ENCODE measurements at regions of chr10 and their contacts with region 1.

Region 1: DNA sequence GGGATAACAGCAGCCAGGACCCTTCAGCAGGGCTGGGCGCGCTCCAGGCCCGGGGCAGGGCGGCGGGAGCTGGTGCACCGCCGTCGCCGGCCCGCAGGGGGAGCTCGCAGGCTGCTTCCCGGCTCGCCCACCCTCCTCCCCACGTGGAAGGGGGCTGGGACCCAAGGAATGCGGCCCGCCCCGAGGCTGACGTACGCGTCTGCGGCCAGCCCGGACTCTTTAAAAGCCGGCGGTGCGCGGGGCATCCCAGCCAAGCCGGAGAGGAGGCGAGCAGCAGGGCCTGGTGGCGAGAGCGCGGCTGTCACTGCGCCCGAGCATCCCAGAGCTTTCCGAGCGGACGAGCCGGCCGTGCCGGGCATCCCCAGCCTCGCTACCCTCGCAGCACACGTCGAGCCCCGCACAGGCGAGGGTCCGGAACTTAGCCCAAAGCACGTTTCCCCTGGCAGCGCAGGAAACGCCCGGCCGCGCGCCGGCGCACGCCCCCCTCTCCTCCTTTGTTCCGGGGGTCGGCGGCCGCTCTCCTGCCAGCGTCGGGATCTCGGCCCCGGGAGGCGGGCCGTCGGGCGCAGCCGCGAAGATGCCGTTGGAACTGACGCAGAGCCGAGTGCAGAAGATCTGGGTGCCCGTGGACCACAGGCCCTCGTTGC is at the start of gene PFKFB3:
- DNase-seq: peak; percentile 95 to 97
- ATAC-seq: peak; percentile 93 to 96 (median 95)
- H3K4me3 ChIP-seq: peak within 1 kb of the TSS; percentile 50 to 94 (median 78)
- H3K27ac ChIP-seq: peak within 1 kb of the TSS; percentile 22 to 98 (median 92)
- H3K4me1 ChIP-seq: peaks cover 6 to 52% (median 31%) of the 10 kb centered on the region in 9 donors
- H3K27me3 ChIP-seq: no peaks in the 10 kb centered on the region
- CTCF ChIP-seq: peak; percentile 94 to 99 (median 98)
- total RNA-seq, gene PFKFB3: 7.6 to 77.3 (median 16.3) TPM

Region 2: DNA sequence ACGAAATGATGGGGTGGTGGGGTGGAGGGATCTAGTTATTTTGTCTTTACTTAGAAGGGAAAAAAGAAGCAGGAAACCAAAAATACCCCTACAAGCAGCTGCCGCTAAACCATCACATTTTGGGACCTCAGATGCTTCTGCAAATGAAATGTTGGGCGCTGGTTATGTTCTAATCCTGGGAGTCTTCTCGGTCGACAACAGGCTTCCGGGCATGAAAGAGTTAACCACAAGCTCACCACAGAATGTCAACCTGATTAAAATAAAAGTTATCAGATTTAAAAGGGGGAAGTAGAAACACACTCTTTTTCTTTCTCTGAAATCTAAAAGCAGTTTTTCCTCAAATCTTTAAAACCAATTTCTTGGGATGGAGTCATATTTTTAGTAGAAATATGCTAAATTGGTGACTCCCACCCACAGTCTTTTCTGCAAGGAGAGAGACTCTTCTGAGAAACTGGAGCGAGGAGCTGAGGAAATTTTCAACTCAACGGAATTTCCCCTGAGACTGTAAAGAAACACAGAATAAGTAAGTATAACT is 157.4 kb before region 1 on chr10:
- intact Hi-C with region 1: no loop called
- DNase-seq: peak in 1 of 2 donors; percentile 1
- ATAC-seq: no peak
- H3K4me3 ChIP-seq: no peak overlapping the region
- H3K27ac ChIP-seq: no peak overlapping the region
- H3K4me1 ChIP-seq: peaks cover 0 to 18% (median 3%) of the 10 kb centered on the region in 9 donors
- H3K27me3 ChIP-seq: no peaks in the 10 kb centered on the region
- CTCF ChIP-seq: no peak

Region 3: DNA sequence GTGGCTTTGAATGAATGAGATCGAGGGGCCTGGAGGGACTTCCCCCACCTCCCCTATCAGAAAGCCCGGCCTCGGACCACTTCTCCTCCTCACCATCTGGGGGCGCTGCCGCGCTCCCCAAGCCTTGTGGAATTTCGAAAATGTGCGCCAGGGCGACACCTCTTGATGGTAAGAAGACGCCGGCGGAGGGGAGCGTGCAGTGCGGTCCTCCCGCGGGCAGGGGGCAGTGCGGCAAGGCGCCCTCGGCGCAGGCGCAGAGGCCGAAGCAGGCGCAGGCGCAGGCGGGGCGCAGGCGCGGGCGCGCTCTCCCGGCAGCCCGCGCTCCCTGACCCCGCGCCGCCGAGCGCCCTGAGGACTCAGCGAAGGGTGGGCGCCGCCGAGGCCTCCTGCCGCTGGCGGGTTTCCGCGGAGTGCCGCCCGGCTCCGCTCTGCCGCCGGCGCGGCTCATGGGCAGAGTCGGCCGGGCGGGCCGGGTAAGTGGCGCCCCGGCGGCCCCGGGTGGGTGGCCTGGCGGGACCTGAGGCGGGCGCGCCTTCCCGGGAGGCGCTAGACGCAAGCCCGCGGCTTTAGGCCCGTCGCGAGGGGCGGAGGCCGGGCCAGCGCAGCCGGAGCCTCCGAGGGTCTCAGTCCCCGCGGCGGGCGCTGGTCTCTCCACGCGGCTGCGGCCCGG is 114.0 kb before region 1 on chr10 and contains the start of gene RBM17:
- intact Hi-C with region 1: loop called in 1 of 10 experiments (anchors 5 kb)
- DNase-seq: peak; percentile 95 to 96
- ATAC-seq: peak; percentile 85 to 97 (median 92)
- H3K4me3 ChIP-seq: peak within 1 kb of the TSS; percentile 67 to 95 (median 88)
- H3K27ac ChIP-seq: peak within 1 kb of the TSS; percentile 81 to 97 (median 94)
- H3K4me1 ChIP-seq: peaks cover 8 to 70% (median 59%) of the 10 kb centered on the region in 9 donors
- H3K27me3 ChIP-seq: peaks cover 0 to 3% (median 0%) of the 10 kb centered on the region in 7 donors
- CTCF ChIP-seq: peak; percentile 99 to 100 (median 100)
- total RNA-seq, gene RBM17: 53.4 to 93.2 (median 64.0) TPM

Region 4: DNA sequence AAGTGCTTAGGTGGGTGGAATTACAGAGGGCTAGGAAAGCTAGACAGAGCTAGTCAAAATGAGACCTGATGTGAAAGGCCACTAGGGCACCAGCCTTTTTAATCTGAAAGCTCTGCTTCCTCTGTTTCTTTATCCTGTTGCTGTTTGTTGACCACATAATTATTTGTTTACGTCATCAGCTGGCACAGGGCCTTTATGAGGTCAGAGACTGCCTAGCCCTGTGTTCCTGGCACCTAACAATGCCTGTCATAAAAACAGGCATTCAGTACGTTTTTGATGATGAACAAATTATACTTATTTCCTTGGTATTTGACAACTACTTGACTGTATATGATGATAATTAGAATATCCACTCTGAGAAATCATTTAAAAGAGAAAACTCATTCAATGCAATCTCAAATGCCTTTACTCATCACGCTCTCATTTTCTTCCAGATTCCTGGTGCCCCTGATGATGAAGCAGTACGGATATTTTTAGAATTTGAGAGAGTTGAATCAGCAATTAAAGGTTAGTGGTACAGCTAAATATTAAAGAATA is 87.9 kb before region 1 on chr10:
- intact Hi-C with region 1: loop called in 5 of 10 experiments (anchors 5 kb)
- DNase-seq: peak in 1 of 2 donors; percentile 32
- ATAC-seq: peak in 3 of 8 donors; percentile 42 to 65 (median 56)
- H3K4me3 ChIP-seq: no peak overlapping the region
- H3K27ac ChIP-seq: peak overlapping the region in 9 of 10 donors; percentile 26 to 73 (median 55)
- H3K4me1 ChIP-seq: peaks cover 0 to 39% (median 26%) of the 10 kb centered on the region in 9 donors
- H3K27me3 ChIP-seq: no peaks in the 10 kb centered on the region
- CTCF ChIP-seq: no peak

Region 5: DNA sequence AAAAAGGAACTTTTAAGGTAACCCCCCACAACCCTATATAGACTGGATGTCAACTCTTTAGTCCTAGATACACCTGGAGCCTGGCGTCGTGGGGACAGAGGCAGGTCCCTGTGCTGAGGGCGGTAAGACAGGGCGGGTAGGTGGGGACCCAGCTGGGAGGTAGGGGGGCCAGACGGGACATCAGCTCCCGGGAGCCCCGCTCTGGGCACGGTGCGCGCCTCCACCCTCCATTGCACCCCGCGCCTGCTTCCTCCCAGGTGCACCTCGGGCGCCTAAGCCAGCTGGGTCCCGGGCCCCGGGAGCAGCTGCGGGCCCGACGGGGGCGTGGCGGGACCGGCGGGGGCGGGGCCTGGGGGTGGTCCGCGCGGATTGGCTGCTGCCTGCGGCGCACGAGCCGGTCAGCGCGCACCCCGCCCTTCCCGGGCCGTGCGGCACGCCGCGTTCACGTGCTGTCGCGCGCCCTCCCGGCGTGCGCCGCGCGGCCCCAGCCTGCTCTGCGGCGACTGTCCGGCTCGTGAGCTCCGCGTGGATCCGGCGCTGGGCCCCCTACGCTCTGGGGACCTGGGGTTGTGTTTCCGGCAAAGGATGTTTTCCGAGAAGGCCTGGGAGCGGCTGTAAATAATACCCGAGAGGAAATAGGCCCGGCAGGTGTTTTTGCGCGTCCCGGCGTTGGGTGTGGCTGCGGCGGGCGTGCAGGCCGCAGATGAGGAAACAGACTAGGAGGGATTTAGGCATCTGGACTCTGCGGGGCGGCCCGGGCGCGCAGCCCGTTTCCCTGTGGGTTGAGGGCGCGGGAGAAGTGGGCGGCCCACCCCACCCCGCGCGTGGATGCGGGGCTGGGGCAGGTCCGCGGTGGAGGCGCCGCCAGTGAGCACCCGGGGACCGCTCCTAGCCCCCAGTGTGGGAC is 39.2 kb before region 1 on chr10:
- intact Hi-C with region 1: loop called in 6 of 10 experiments (anchors 2 to 5 kb)
- DNase-seq: peak; percentile 91 to 92
- ATAC-seq: peak; percentile 98 to 100 (median 99)
- H3K4me3 ChIP-seq: peak overlapping the region; percentile 27 to 97 (median 82)
- H3K27ac ChIP-seq: peak overlapping the region; percentile 91 to 98 (median 94)
- H3K4me1 ChIP-seq: peaks cover 6 to 49% (median 30%) of the 10 kb centered on the region in 9 donors
- H3K27me3 ChIP-seq: no peaks in the 10 kb centered on the region
- CTCF ChIP-seq: peak in 1 of 9 donors; percentile 9

Region 6: GRCh38 chr10:6275022-6275997 is 72.5 kb after region 1 on chr10:
- intact Hi-C with region 1: loop called in 1 of 10 experiments (anchors 2 kb)
- DNase-seq: peak; percentile 84 to 86
- ATAC-seq: peak; percentile 92 to 99 (median 96)
- H3K4me3 ChIP-seq: peak overlapping the region in 6 of 10 donors; percentile 17 to 38 (median 26)
- H3K27ac ChIP-seq: peak overlapping the region in 9 of 10 donors; percentile 46 to 92 (median 67)
- H3K4me1 ChIP-seq: peaks cover 0 to 53% (median 6%) of the 10 kb centered on the region in 9 donors
- H3K27me3 ChIP-seq: no peaks in the 10 kb centered on the region
- CTCF ChIP-seq: no peak

Region 7: GRCh38 chr10:6473901-6474370 is 271.1 kb after region 1 on chr10:
- intact Hi-C with region 1: no loop called
- DNase-seq: no peak
- ATAC-seq: no peak
- H3K4me3 ChIP-seq: peak overlapping the region in 1 of 10 donors; percentile 28
- H3K27ac ChIP-seq: peak overlapping the region in 1 of 10 donors; percentile 86
- H3K4me1 ChIP-seq: peaks cover 0 to 27% (median 0%) of the 10 kb centered on the region in 9 donors
- H3K27me3 ChIP-seq: peaks cover 0 to 9% (median 8%) of the 10 kb centered on the region in 7 donors
- CTCF ChIP-seq: no peak